Activated T-helper 1 cell treated with anti-CD3 and anti-CD28 coated beads, Interleukin-12 subunit alpha, Interleukin-12 subunit beta, Interleukin-2, Interleukin-4 antibody, amounts not matched to agents 30 ng/mL and 10 ng/mL and 1 ng/mL, durations not matched to agents 14 hours and 24 hours and 36 hours (primary cell): ENCODE measurements at regions of chr6 and their contacts with region 1.

Region 1: GRCh38 chr6:145633981-145634627 is 101.2 kb downstream of the EPM2A start:
- DNase-seq: peak; percentile 52
- H3K4me3 Mint-ChIP-seq: no peak overlapping the region
- H3K27ac Mint-ChIP-seq: no peak overlapping the region
- H3K4me1 Mint-ChIP-seq: peaks cover 9% of the 10 kb centered on the region
- H3K27me3 Mint-ChIP-seq: peaks cover 5% of the 10 kb centered on the region

Region 2: GRCh38 chr6:144110210-144110609 is 1523.9 kb before region 1 on chr6:
- intact Hi-C with region 1: loop called (anchors 5 kb)
- DNase-seq: no peak
- H3K4me3 Mint-ChIP-seq: no peak overlapping the region
- H3K27ac Mint-ChIP-seq: no peak overlapping the region
- H3K4me1 Mint-ChIP-seq: peaks cover 8% of the 10 kb centered on the region
- H3K27me3 Mint-ChIP-seq: peaks cover 4% of the 10 kb centered on the region

Region 3: GRCh38 chr6:145887969-145888368 is 253.9 kb after region 1 on chr6:
- intact Hi-C with region 1: loop called (anchors 2 kb)
- DNase-seq: no peak
- H3K4me3 Mint-ChIP-seq: no peak overlapping the region
- H3K27ac Mint-ChIP-seq: no peak overlapping the region
- H3K4me1 Mint-ChIP-seq: no peaks in the 10 kb centered on the region
- H3K27me3 Mint-ChIP-seq: no peaks in the 10 kb centered on the region